Naive thymus-derived CD4-positive, alpha-beta T cell (primary cell): ENCODE measurements at regions of chr4 and their contacts with region 1.

Region 1: DNA sequence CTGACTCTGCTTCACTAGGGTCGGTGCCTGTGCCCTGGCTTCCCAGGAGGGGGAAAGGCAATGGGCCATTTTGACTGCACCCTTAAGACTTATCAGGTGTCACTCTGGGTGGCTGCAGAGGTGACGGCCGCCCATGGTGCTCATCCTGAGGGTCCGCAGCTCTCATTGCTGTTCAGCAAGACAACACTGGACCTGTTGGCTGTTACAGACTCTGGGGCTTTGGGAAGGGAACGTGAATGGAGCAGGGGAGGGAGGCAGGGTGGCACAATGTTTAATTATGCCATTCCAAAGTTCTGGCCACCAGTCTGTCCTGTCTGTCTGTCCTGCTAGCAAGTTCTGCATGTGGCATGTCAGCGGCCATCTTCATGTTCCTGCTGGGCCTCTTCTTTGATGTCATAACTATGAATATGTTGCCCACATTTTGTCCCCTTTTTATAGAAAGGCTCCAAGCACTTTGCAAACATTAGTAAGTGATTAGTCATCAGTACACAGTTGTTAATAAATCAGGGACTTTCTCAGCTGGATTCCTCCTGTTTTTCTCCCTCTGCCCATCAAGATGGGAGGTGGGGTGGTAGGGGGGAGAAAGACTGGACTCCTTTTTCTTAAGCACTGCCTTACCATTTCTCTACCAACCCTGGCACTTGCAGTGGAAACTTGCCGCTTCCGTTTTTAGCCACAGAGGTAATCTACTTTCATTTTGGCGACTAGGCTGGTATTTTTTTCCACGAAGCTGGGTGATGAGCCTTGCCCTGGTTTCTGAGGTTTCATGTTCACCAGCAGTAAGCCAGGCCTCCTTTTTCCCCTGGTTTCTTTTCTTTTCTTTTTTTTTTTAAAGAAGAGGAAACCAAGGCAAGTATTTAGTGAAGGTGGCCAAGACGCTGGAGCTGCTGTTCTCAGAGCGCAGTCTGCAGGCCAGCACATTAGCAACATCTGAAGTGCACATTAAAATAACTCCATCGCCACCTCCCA is 88.6 kb upstream of the TRIM2 start:
- DNase-seq: peak in 8 of 9 donors; percentile 64 to 93 (median 89)
- ATAC-seq: peak; percentile 65
- H3K4me3 ChIP-seq: peak overlapping the region; percentile 46
- H3K4me3 Mint-ChIP-seq: peak overlapping the region in 2 of 10 donors; percentile 70 to 79
- H3K27ac ChIP-seq: peak overlapping the region; percentile 84
- H3K27ac Mint-ChIP-seq: no peak overlapping the region
- H3K4me1 ChIP-seq: peaks cover 43 to 62% of the 10 kb centered on the region in 2 donors
- H3K4me1 Mint-ChIP-seq: peaks cover 0 to 26% (median 11%) of the 10 kb centered on the region in 7 donors
- H3K27me3 ChIP-seq: no peaks in the 10 kb centered on the region
- H3K27me3 Mint-ChIP-seq: peaks cover 0 to 9% (median 0%) of the 10 kb centered on the region in 5 donors

Region 2: DNA sequence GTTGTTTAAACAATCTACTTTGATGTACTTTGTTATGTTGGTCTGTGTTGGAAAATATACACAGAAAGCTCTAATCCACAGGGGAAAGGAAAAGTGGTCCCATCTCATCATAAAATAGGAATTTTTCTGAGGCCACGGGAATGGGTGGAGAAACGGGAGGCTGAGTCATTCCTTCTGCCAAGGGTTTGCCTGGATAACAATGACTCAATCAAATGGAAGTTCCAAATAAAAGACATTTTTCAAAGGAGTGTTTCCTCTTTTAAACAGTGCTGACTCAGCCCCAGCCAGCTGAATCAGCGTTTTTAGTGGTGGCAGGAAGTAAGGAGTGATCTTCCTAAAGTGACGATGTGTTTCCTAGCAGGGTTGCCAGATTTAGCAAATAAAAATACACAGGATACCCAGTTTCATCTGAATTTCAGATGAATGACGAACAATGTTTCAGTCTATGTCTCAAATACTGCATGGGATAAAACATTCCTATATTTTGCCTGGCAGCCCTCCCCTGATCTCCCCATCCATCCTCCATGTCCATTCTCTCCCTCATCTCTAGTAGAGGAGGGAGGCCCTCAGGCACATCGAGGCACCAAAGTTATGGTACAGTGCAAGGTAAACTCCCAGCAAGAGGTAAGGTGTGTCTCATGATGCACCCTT is 1009.4 kb before region 1 on chr4:
- CTCF ChIA-PET with region 1: no interaction called
- POLR2A ChIA-PET with region 1: no interaction called
- intact Hi-C with region 1: loop called in 1 of 2 experiments (anchors 10 kb)
- DNase-seq: peak in 1 of 9 donors; percentile 26
- ATAC-seq: peak; percentile 27
- H3K4me3 ChIP-seq: no peak overlapping the region
- H3K4me3 Mint-ChIP-seq: peak overlapping the region in 9 of 10 donors; percentile 7 to 83 (median 53)
- H3K27ac ChIP-seq: peak overlapping the region; percentile 89
- H3K27ac Mint-ChIP-seq: peak overlapping the region; percentile 39 to 99 (median 95)
- H3K4me1 ChIP-seq: peaks cover 55 to 95% of the 10 kb centered on the region in 2 donors
- H3K4me1 Mint-ChIP-seq: peaks cover 64 to 100% (median 93%) of the 10 kb centered on the region in 7 donors
- H3K27me3 ChIP-seq: no peaks in the 10 kb centered on the region
- H3K27me3 Mint-ChIP-seq: no peaks in the 10 kb centered on the region

Region 3: DNA sequence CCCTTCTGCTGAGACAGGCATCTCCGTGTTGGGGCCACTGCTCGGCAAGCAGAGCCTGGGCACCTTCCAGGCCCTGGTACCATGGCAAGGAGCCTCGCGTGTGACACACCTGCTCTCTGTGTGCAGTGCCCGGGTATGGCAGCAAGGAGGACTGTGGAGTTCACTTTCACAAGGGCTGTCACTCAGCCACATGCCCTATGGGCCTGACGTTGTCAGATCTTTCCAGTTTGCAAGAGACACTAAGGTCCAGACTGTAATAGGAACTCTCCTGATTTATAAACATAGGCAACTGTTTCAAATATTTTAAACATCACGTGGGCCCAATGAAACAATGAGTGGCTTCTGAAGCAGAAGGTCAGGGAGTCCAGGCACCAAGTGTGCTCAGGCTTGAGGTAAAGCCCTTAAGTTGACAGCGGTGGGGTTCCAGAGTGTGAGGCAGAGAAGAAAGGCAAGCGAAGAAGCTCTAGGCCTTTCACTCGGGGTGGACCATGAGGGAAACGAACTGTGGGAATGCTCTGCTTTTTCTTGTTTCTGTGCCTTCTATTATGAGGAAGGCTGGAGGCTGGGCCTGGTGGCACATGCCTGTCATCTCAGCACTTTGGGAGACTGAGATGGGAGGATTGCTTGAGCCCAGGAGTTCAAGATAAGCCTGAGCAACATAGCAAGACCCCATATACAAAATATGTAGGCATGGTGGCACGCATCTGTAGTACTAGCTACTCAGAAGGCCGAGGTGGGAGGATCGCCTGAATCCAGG is 20.0 kb before region 1 on chr4:
- CTCF ChIA-PET with region 1: interaction called, 5 read pairs
- POLR2A ChIA-PET with region 1: interaction called, 9 read pairs
- intact Hi-C with region 1: loop called in 1 of 2 experiments (anchors 2 kb)
- DNase-seq: no peak
- ATAC-seq: no peak
- H3K4me3 ChIP-seq: no peak overlapping the region
- H3K4me3 Mint-ChIP-seq: no peak overlapping the region
- H3K27ac ChIP-seq: no peak overlapping the region
- H3K27ac Mint-ChIP-seq: peak overlapping the region in 4 of 9 donors; percentile 15 to 78 (median 62)
- H3K4me1 ChIP-seq: no peaks in the 10 kb centered on the region
- H3K4me1 Mint-ChIP-seq: peaks cover 0 to 5% (median 4%) of the 10 kb centered on the region in 7 donors
- H3K27me3 ChIP-seq: no peaks in the 10 kb centered on the region
- H3K27me3 Mint-ChIP-seq: peaks cover 0 to 7% (median 0%) of the 10 kb centered on the region in 5 donors

Region 4: DNA sequence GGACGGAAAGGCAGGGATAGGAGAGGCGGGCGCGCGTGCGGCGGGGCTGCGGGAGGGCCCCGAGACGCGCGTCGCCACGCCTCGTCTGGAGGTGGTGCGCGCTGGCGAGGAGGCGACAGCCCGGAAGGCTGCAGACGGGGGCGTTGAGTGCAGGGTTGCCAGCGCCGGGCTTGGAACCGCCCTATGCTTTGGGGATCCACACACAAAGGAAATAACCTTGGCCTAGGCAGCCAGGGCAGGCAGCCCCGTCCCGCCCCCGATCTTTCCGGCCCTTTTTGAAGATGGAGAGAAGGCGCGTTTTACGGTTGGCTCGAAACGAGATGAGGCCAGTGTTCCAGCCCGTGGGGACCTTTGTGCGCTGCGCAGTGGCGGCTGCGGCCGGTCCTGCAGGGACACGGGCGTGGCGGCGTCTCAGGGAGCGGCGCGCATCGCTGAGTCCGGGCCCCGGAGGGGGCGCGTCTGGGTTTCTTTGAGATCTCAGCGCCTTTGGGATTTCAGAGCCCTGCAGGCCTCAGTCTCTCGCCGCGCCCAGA is 37.8 kb after region 1 on chr4:
- CTCF ChIA-PET with region 1: interaction called, 3 read pairs
- POLR2A ChIA-PET with region 1: no interaction called
- intact Hi-C with region 1: loop called (anchors 1 kb)
- DNase-seq: peak; percentile 53 to 84 (median 78)
- ATAC-seq: peak; percentile 95
- H3K4me3 ChIP-seq: peak overlapping the region; percentile 81
- H3K4me3 Mint-ChIP-seq: peak overlapping the region; percentile 91 to 96 (median 92)
- H3K27ac ChIP-seq: peak overlapping the region; percentile 69
- H3K27ac Mint-ChIP-seq: peak overlapping the region; percentile 78 to 90 (median 85)
- H3K4me1 ChIP-seq: peaks cover 3 to 12% of the 10 kb centered on the region in 2 donors
- H3K4me1 Mint-ChIP-seq: peaks cover 23 to 42% (median 38%) of the 10 kb centered on the region in 7 donors
- H3K27me3 ChIP-seq: no peaks in the 10 kb centered on the region
- H3K27me3 Mint-ChIP-seq: peaks cover 0 to 43% (median 0%) of the 10 kb centered on the region in 5 donors